BJ (cell line): ENCODE measurements at regions of chr9 and their contacts with region 1.

Region 1: DNA sequence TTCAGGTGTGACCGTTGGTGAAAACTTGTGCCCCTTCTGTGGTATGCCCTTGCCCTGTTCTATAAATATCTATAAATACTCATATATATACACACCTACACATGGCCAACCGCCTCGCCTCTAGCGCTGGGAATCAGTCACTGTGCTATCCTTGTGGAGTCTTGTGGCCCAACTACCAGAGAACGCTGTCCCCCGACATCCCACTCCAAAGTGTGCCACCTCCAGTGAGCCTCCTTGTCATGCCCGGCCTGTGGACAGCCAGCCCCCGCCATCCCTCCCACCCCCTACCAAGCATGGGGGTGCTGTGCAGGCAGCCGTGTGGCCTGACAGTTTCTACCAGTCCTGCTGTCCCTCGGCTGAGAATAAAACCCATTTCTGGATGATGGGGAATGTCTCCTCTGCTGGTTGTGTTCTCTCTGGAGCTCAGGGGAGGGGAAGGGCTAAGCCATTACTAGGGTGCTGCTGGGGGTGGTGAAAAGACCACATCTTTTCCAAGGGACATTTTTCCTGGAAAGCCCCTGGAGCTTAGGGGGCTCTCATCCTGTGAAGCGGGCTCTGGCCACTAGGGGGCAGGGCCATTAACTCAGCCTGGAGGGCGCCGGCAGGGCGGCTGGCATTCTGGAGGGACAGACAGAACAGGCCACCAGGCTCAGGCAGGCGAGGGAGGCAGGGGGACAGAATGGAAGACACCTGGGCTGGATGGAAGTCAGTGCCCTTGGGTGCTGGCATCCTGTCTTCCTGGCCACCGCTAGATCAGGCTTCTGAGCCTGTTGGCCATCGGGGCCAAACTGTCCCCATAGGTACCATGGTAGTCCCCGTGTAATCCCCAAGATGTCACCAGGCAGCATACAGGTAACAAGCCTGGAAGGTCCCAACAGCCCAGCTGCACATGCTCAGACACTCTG is 20.7 kb downstream of the GOLGA2 start:
- DNase-seq: no peak
- H3K4me3 ChIP-seq: no peak overlapping the region
- H3K27me3 ChIP-seq: no peaks in the 10 kb centered on the region
- CTCF ChIP-seq: peak; percentile 94

Region 2: DNA sequence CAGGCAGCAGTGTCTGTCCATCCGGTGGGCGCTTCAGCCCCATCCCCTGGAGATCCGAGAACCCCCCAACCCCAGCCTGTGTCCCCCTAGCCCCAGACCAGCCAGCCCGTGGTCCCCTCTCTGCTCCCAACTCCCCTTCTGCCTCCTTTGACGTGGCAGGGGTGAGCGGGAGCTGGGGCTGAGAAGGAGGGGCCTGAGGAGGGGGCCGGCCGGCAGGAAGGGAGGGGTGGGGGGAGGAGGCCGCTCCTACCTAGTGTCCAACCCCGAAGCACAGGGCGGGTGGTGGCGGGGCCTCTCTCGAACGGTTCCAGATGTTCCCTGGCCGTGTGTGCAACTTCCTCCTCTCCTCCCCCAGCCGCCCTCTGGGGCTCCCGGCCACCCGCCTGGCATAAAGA is 10.3 kb before region 1 on chr9:
- CTCF ChIA-PET with region 1: interaction called, 15 read pairs
- POLR2A ChIA-PET with region 1: no interaction called
- DNase-seq: peak; percentile 59
- H3K4me3 ChIP-seq: peak overlapping the region; percentile 82
- H3K27me3 ChIP-seq: no peaks in the 10 kb centered on the region
- CTCF ChIP-seq: no peak

Region 3: DNA sequence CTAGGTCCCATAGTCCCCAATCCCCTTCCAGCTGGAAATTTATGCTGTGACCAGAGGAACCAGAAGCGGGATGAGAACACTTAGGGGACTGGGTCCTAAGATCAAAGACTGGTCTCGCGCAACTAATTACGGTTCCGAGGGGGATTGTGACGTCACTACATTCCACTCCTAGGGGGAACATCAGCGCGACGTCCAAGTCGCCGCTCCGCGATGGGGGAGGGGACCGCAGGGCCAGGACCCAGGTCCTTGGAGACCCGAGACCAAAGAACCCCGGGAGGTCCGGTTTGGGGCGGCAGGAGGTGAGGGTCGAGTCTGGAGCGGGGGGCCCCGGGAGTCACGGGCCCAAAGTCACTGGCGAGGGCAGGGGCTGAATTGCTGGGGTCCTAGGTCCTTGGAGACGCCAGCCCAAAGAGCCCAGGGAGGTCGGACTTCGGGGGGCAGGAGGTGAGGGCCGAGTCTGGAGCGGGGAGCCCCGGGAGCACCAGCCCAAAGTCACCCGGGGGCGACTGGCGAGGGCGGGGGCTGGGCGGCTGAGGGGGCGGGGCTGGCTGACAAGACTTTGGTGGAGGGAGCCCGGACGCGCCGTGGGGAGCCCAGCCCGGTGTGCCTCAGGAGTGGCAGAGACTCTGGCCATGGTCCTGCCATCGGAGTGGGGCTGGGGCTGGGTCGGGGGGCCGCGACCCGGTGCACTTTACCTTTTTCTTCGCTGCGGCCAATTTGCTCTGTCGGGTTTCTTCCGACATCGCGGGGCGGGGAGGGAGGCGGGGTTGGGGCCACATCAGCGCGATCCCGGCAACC is 20.3 kb after region 1 on chr9:
- CTCF ChIA-PET with region 1: interaction called, 24 read pairs
- POLR2A ChIA-PET with region 1: no interaction called
- DNase-seq: no peak
- H3K4me3 ChIP-seq: peak overlapping the region; percentile 91
- H3K27me3 ChIP-seq: no peaks in the 10 kb centered on the region
- CTCF ChIP-seq: no peak

Region 4: DNA sequence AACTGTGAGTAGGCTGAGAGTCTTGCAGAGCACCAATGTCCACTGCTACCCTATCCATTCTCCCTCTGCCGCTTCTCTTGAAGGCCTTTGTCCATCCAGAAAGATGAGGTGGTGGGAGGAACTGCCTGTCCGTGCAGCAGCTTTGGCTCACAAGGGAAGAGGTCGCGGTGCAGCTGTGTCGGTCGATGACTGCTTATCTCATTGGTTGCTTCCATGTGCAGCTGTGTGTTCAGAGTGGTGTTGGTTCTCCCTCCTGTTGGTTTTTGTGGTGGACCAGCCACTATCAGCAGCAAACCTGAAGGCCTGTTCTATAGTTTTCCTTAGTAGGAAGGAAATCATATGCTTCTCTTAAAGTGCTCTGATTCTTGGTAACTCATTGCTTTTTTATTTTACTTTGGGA is 337.9 kb after region 1 on chr9:
- CTCF ChIA-PET with region 1: no interaction called
- POLR2A ChIA-PET with region 1: no interaction called
- DNase-seq: no peak
- H3K4me3 ChIP-seq: no peak overlapping the region
- H3K27me3 ChIP-seq: no peaks in the 10 kb centered on the region
- CTCF ChIP-seq: no peak